PC-9 (cell line): ENCODE measurements at regions of chr13 and their contacts with region 1.

Region 1: GRCh38 chr13:48595431-48596429 is 58.0 kb upstream of the CYSLTR2 start:
- DNase-seq: peak in 1 of 2 experiments; percentile 31
- H3K4me3 ChIP-seq: no peak overlapping the region
- H3K27ac ChIP-seq: no peak overlapping the region
- H3K4me1 ChIP-seq: no peaks in the 10 kb centered on the region
- H3K27me3 ChIP-seq: no peaks in the 10 kb centered on the region
- CTCF ChIP-seq: peak; percentile 64

Region 2: DNA sequence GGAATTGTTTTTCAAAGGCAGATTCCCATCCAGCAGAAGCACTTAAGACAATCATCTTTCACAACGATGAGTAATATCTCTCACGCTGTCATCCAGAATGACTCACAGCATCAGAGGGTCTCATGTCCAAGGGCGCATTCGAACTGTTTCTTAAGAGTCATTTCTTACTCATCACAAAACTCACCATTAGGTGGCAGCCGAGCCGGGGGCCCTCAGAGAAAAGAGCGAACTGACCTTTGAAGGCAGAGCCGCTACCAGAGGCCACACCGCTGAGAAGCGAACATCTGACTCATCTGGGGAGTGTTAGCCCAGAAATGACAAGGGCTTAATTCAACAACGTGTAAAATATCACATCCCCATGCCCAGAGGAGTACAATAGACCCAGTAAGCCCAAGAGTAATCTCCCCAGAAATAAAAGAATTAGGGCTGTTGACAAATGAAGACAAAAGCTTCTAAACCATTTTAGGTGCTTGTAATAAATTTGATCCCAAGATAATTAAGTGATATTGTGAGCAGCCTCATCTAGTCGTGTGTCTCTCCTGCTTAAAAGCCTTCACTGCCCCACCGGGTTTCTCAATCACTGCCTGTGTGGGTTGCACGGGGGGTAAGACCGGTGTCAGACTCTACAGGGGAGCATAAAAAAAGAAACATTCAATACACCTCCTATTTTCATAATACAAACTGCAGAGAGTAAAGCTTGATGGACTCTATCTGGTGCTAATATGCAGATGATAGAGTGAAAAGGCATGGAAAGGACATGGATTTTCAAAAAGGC is 154.2 kb after region 1 on chr13:
- CTCF ChIA-PET with region 1: no interaction called
- POLR2A ChIA-PET with region 1: no interaction called
- intact Hi-C with region 1: loop called (anchors 5 kb)
- DNase-seq: peak; percentile 62 to 77
- H3K4me3 ChIP-seq: no peak overlapping the region
- H3K27ac ChIP-seq: no peak overlapping the region
- H3K4me1 ChIP-seq: no peaks in the 10 kb centered on the region
- H3K27me3 ChIP-seq: no peaks in the 10 kb centered on the region
- CTCF ChIP-seq: peak; percentile 64